ENCODE measurements at regions of chr5 and their contacts with region 1.

Region 1: DNA sequence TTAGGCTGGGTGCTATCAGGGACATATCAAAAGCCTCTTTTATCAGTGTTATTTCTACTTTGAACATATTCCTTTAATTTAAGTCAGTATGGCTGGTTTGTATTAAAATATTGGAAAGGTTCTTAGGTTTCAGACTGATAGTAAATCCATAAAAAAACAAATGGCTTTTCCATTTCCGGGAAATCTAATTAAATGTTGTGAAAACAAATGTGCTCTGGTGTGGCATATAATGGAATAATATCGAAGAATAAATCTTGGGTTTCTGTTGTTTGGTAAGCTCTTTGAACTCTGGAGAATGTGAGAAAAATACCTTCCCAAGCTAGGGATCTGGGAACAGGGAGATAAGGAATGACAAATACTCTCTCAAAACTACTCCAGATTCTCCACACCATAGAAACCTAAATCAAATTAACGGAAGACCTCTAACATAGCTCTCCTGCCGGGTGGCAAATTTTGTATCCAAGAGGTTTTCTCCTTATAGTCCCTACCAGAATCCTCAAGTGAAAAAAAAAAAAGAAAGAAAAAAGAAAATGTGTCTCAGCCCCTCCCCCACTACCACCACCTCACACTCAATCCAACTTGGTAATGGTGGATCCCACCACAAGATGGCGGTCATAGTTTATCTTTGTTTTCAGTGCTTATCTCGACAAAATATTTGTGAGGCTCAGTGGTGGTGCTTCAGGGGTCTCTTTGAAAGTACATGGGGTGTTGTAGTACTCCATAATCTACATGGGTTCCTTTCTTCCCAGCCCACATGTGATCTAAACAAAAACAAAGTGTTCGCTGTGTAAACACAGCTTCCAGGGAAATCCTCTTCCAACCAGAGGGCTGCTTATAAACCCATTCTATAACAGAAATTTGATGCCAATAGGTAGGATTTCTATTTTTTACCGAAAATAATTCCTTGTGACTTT is 54.6 kb upstream of the FST start:
- DNase-seq: peak; percentile 45
- ATAC-seq: peak; percentile 77
- H3K4me3 ChIP-seq: no peak overlapping the region
- H3K27ac ChIP-seq: no peak overlapping the region
- H3K4me1 ChIP-seq: peaks cover 0 to 2% of the 10 kb centered on the region in 2 experiments; a peak in 1 of 4 replicates
- H3K27me3 ChIP-seq: no peaks in the 10 kb centered on the region
- CTCF ChIP-seq: peak; percentile 44 to 67 (median 65); a peak in 5 of 6 replicates
- POLR2A ChIP-seq: no peak
- RAD21 ChIP-seq: peak; percentile 74

Region 2: GRCh38 chr5:53170748-53171349 is 255.0 kb before region 1 on chr5:
- CTCF ChIA-PET with region 1: no interaction called
- POLR2A ChIA-PET with region 1: no interaction called
- RAD21 ChIA-PET with region 1: no interaction called
- intact Hi-C with region 1: loop called (anchors 2 kb)
- DNase-seq: peak; percentile 32
- ATAC-seq: peak; percentile 83
- H3K4me3 ChIP-seq: no peak overlapping the region
- H3K27ac ChIP-seq: no peak overlapping the region
- H3K4me1 ChIP-seq: no peaks in the 10 kb centered on the region
- H3K27me3 ChIP-seq: no peaks in the 10 kb centered on the region
- CTCF ChIP-seq: peak; percentile 54 to 74 (median 57); a peak in 5 of 6 replicates
- POLR2A ChIP-seq: no peak
- RAD21 ChIP-seq: peak; percentile 76

Region 3: GRCh38 chr5:53262348-53262970 is 163.4 kb before region 1 on chr5:
- CTCF ChIA-PET with region 1: interaction called, 3 read pairs
- POLR2A ChIA-PET with region 1: no interaction called
- RAD21 ChIA-PET with region 1: no interaction called
- intact Hi-C with region 1: loop called (anchors 1 kb)
- DNase-seq: peak; percentile 8
- ATAC-seq: peak; percentile 49; the same call in 1 of the 2 replicates
- H3K4me3 ChIP-seq: no peak overlapping the region
- H3K27ac ChIP-seq: no peak overlapping the region
- H3K4me1 ChIP-seq: no peaks in the 10 kb centered on the region
- H3K27me3 ChIP-seq: no peaks in the 10 kb centered on the region
- CTCF ChIP-seq: peak; percentile 35 to 67 (median 54); a peak in 5 of 6 replicates
- POLR2A ChIP-seq: no peak
- RAD21 ChIP-seq: peak; percentile 68

Region 4: GRCh38 chr5:53291047-53291927 is 134.6 kb before region 1 on chr5:
- CTCF ChIA-PET with region 1: no interaction called
- POLR2A ChIA-PET with region 1: no interaction called
- RAD21 ChIA-PET with region 1: no interaction called
- intact Hi-C with region 1: no loop called
- DNase-seq: no peak
- ATAC-seq: no peak
- H3K4me3 ChIP-seq: no peak overlapping the region
- H3K27ac ChIP-seq: no peak overlapping the region
- H3K4me1 ChIP-seq: no peaks in the 10 kb centered on the region
- H3K27me3 ChIP-seq: no peaks in the 10 kb centered on the region
- CTCF ChIP-seq: no peak
- POLR2A ChIP-seq: no peak
- RAD21 ChIP-seq: no peak